Right ventricle myocardium inferior (tissue), 1 donor: ENCODE measurements at regions of chr7 and their contacts with region 1.

Region 1: GRCh38 chr7:37284805-37285231 is 163.8 kb downstream of the ELMO1 start:
- DNase-seq: peak; percentile 55
- ATAC-seq: peak; percentile 46

Region 2: DNA sequence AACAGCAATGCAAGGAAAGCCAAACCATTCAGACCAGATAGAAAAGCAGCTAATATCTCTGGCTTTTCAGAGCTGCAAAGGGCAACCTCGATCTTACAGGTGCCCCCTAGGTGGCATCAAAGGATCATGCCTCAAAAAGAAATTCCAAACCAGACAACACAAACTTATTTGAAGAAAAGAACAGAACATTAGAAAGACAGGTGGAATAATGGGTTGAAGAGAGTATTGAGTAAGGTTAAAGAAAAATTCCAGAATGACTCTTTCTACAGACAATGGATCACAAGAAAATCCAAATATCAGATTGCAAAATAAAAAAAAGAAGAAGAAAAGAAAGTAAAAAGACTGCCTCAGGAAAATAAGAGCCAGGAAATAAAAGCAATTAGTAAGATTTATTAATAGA is 49.9 kb before region 1 on chr7:
- intact Hi-C with region 1: no loop called
- DNase-seq: no peak
- ATAC-seq: no peak

Region 3: DNA sequence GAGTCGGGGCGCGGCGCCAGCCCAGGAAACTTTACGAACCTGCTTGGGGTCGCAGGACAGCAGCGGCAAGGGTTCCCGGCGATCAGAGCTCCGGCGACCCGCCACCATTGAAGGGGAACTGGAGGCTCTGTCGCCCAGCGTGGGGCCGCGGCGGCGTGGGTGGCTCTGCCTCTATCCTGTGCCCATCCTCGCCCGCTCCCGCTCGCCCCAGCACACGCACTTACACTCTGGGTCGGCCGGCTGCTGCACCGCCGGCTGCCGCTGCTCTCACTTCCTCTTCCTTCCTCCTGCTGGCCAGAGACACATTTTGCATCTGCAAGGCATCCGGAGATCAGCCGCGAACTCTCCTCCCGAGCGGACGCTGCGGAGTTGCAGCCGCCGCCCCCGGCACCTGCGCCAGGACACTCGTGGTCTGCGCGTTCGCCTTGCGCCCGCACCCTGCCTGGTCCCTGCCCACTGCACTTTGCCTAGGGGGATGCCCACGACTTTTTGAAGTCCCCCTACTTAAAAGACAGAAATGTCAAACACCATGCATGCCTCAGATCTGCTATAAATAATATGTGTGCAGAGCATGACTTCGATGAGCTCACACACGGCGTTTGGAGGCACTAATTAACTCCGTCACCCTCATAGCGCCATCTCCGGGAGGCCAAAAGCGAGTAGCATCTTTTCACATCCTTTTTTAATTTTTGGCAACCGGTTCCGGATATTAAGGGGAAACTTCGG is 164.0 kb after region 1 on chr7 and contains the start of gene ELMO1:
- intact Hi-C with region 1: loop called (anchors 2 kb)
- DNase-seq: peak; percentile 92
- ATAC-seq: peak; percentile 88
- total RNA-seq, gene ELMO1: 13.8 TPM

Region 4: GRCh38 chr7:37495574-37496184 is 210.9 kb after region 1 on chr7:
- intact Hi-C with region 1: loop called (anchors 5 kb)
- DNase-seq: no peak
- ATAC-seq: no peak